CD8-positive, alpha-beta T cell (primary cell): ENCODE measurements at regions of chr1 and their contacts with region 1.

Region 1: DNA sequence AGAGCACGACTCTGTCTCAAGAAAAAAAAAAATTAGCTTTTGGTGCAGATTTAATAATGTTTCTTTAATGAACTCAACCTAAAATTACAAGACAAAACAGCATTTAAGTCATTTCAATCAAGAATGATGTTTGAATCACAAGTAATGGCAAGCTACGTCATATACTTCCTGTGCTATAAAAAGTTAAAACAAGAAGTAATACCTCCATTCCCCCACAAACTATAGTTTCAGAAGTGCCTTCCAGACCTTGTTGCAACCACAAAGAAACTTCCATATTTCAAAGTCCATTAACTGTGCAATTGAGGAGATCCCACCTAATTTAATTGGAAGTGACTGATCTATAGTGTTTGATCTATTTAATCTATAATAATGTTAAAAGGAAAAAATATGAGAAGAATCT is 15.1 kb downstream of the NRDC start:
- DNase-seq: peak in 2 of 9 experiments; percentile 14 to 57
- ATAC-seq: peak; percentile 68
- H3K4me3 ChIP-seq: no peak overlapping the region
- H3K4me3 Mint-ChIP-seq: no peak overlapping the region
- H3K27ac ChIP-seq: no peak overlapping the region
- H3K27ac Mint-ChIP-seq: peak overlapping the region; percentile 19
- H3K4me1 ChIP-seq: peaks cover 5% of the 10 kb centered on the region
- H3K4me1 Mint-ChIP-seq: peaks cover 44% of the 10 kb centered on the region
- H3K27me3 ChIP-seq: no peaks in the 10 kb centered on the region
- H3K27me3 Mint-ChIP-seq: no peaks in the 10 kb centered on the region
- CTCF ChIP-seq: no peak

Region 2: GRCh38 chr1:51792864-51793263 is 70.5 kb before region 1 on chr1:
- CTCF ChIA-PET with region 1: no interaction called
- POLR2A ChIA-PET with region 1: no interaction called
- intact Hi-C with region 1: no loop called
- DNase-seq: no peak
- ATAC-seq: no peak
- H3K4me3 ChIP-seq: no peak overlapping the region
- H3K4me3 Mint-ChIP-seq: no peak overlapping the region
- H3K27ac ChIP-seq: no peak overlapping the region
- H3K27ac Mint-ChIP-seq: peak overlapping the region; percentile 69
- H3K4me1 ChIP-seq: no peaks in the 10 kb centered on the region
- H3K4me1 Mint-ChIP-seq: no peaks in the 10 kb centered on the region
- H3K27me3 ChIP-seq: no peaks in the 10 kb centered on the region
- H3K27me3 Mint-ChIP-seq: no peaks in the 10 kb centered on the region
- CTCF ChIP-seq: no peak

Region 3: DNA sequence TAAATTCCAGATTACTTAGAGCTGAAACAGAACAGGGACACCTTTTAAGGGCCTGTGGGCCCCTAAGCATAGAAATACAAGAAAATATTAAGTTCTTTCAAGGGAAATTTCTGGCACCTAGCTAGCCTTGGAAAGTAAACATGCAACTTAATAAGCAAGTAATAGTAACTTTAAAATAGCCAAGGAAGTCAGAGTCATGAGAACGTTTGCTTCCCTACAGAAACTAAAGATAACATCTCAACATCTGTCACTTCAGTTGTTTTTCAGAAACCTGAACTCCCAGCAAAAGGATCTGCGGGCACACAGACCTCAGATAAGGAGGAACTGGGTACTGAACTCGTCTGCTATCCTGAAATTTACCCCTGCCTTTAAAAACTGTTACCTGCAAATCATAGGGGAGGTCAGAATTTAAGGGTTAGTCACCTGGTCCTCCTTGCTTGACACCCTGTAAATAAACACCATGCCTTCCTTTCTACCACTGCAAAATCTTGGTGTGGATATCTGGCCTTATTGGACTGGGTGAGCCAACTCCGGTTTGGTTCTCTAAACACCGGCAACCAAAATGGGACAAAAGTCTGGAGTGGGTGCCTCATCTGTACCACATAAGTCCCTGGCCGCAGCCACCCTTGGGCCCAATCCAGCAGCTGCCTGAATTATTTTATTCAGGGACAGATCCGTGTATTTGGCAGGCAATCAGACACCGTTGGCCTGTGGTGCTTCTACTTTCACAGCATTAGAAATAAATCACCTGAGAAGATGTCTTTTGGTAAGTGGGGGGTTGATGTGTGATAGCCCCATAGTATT is 12.8 kb before region 1 on chr1:
- CTCF ChIA-PET with region 1: no interaction called
- POLR2A ChIA-PET with region 1: no interaction called
- intact Hi-C with region 1: loop called in 1 of 2 experiments (anchors 2 kb)
- DNase-seq: no peak
- ATAC-seq: no peak
- H3K4me3 ChIP-seq: no peak overlapping the region
- H3K4me3 Mint-ChIP-seq: no peak overlapping the region
- H3K27ac ChIP-seq: no peak overlapping the region
- H3K27ac Mint-ChIP-seq: no peak overlapping the region
- H3K4me1 ChIP-seq: no peaks in the 10 kb centered on the region
- H3K4me1 Mint-ChIP-seq: peaks cover 14% of the 10 kb centered on the region
- H3K27me3 ChIP-seq: no peaks in the 10 kb centered on the region
- H3K27me3 Mint-ChIP-seq: no peaks in the 10 kb centered on the region
- CTCF ChIP-seq: no peak

Region 4: DNA sequence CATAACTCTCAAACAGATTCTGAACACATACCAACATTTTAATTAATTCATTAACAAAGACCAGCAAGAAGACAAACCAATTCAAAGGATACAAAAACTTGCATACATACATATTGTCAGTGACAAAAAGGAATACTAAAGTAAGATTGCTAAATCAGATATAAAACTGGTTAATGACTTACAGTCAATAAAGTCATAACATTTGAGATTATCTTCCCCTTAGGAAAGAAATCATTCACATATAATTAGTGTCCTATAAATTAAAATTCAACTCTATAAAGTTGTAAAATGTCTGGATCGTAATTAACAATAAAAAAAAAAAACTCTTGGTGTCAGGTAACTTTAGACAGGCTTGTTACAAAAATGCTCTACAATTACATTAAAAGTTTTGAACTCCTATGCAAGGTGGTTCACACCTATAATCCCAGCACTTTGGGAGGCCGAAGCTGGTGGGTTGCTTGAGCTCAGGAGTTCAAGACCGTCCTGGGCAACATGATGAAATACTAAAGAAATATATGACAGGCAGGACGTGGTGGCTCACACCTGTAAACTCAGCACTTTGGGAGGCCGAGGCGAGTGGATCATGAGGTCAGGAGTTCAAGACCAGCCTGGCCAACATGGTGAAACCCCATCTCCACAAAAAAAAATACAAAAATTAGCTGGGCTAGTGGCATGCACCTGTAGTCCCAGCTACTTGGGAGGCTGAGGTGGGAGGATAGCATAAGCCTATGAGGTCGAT is 144.9 kb after region 1 on chr1:
- CTCF ChIA-PET with region 1: no interaction called
- POLR2A ChIA-PET with region 1: no interaction called
- intact Hi-C with region 1: no loop called
- DNase-seq: no peak
- ATAC-seq: no peak
- H3K4me3 ChIP-seq: no peak overlapping the region
- H3K4me3 Mint-ChIP-seq: no peak overlapping the region
- H3K27ac ChIP-seq: no peak overlapping the region
- H3K27ac Mint-ChIP-seq: no peak overlapping the region
- H3K4me1 ChIP-seq: no peaks in the 10 kb centered on the region
- H3K4me1 Mint-ChIP-seq: no peaks in the 10 kb centered on the region
- H3K27me3 ChIP-seq: no peaks in the 10 kb centered on the region
- H3K27me3 Mint-ChIP-seq: peaks cover 30% of the 10 kb centered on the region
- CTCF ChIP-seq: no peak